CD8-positive, alpha-beta memory T cell (primary cell): ENCODE measurements at regions of chr6 and their contacts with region 1.

Region 1: DNA sequence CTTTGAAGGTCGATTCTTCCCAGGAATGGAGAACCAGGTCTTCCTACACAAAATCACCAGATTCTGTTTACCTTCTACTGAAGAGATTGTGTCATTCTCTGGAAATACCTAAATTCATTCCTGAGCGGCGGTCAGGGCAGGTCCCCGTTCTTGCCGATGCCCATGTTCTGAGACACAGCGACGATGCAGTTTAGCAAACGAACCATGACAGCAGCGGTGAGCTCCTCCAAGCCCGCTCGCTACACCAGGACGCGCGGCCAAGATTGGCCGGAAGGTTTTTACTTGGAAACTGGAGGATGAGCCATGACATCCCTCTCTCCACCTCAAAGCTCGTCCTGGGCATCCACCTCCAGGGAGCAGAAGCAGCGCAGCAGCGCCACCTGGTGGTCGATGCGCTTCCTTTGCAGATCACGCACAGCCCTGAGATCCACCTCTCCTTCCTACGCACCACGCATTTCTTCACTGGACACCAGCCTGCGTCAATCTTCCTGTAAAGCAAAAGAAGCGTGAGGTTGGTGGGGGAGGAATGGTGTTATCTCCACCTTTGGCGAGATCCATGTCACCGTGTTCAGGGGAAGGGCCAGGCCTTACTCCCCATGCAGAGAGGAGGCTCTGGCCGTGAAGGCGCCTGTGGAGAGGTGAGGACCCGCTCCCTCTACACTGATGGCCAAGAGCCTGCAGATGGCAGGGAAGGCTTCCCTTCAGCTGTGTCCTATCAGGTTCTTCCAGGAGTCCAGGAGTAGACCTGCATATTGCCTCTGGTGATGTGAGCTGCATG is 9.9 kb upstream of the HLA-B start:
- DNase-seq: peak; percentile 83 to 92 (median 85)
- H3K4me3 ChIP-seq: peak overlapping the region; percentile 63
- H3K4me3 Mint-ChIP-seq: peak overlapping the region; percentile 66 to 88 (median 83)
- H3K27ac ChIP-seq: no peak overlapping the region
- H3K27ac Mint-ChIP-seq: peak overlapping the region in 7 of 8 donors; percentile 21 to 93 (median 78)
- H3K4me1 ChIP-seq: no peaks in the 10 kb centered on the region
- H3K4me1 Mint-ChIP-seq: peaks cover 12 to 22% (median 15%) of the 10 kb centered on the region in 3 donors
- H3K27me3 ChIP-seq: peaks cover 10% of the 10 kb centered on the region
- H3K27me3 Mint-ChIP-seq: peaks cover 17 to 35% of the 10 kb centered on the region in 2 donors

Region 2: GRCh38 chr6:31190488-31190887 is 176.4 kb before region 1 on chr6:
- CTCF ChIA-PET with region 1: interaction called, 72 read pairs
- POLR2A ChIA-PET with region 1: interaction called, 24 read pairs
- DNase-seq: no peak
- H3K4me3 ChIP-seq: no peak overlapping the region
- H3K4me3 Mint-ChIP-seq: no peak overlapping the region
- H3K27ac ChIP-seq: no peak overlapping the region
- H3K27ac Mint-ChIP-seq: peak overlapping the region in 1 of 8 donors; percentile 72
- H3K4me1 ChIP-seq: no peaks in the 10 kb centered on the region
- H3K4me1 Mint-ChIP-seq: peaks cover 12 to 14% (median 14%) of the 10 kb centered on the region in 3 donors
- H3K27me3 ChIP-seq: no peaks in the 10 kb centered on the region
- H3K27me3 Mint-ChIP-seq: no peaks in the 10 kb centered on the region

Region 3: DNA sequence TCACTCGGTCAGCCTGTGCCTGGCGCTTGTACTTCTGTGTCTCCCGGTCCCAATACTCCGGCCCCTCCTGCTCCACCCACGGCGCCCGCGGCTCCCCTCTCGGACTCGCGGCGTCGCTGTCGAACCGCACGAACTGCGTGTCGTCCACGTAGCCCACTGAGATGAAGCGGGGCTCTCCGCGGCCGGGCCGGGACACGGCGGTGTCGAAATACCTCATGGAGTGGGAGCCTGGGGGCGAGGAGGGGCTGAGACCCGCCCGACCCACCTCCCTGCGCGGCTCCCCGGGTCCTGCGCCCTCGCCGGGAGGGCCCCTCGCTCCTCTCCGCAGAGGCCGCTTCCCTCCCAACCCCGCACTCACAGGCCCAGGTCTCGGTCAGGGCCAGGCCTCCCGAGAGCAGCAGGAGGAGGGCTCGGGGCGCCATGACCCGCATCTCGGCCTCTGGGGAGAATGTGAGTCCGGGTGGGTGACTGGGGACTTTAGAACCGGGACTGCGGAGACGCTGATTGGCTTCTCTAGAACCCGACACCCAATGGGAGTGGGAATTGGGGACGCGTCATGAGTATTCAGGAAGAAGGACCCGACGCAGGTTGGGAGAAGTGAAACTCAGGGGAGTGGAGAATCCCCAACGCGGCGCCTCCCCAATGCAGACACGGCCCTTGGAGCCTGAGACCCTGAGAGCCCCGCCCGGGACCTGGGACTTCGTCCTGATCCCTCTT is 95.1 kb before region 1 on chr6 and contains the start of gene HLA-C:
- CTCF ChIA-PET with region 1: interaction called, 13 read pairs
- POLR2A ChIA-PET with region 1: interaction called, 7 read pairs
- DNase-seq: peak; percentile 86 to 97 (median 91)
- H3K4me3 ChIP-seq: peak within 1 kb of the TSS; percentile 78
- H3K4me3 Mint-ChIP-seq: peak within 1 kb of the TSS; percentile 94 to 100 (median 98)
- H3K27ac ChIP-seq: peak within 1 kb of the TSS; percentile 89
- H3K27ac Mint-ChIP-seq: peak within 1 kb of the TSS; percentile 99 to 100 (median 100)
- H3K4me1 ChIP-seq: peaks cover 49% of the 10 kb centered on the region
- H3K4me1 Mint-ChIP-seq: peaks cover 58 to 70% (median 62%) of the 10 kb centered on the region in 3 donors
- H3K27me3 ChIP-seq: no peaks in the 10 kb centered on the region
- H3K27me3 Mint-ChIP-seq: peaks cover 0 to 20% of the 10 kb centered on the region in 2 donors
- total RNA-seq, gene HLA-C: 823 to 860 TPM

Region 4: DNA sequence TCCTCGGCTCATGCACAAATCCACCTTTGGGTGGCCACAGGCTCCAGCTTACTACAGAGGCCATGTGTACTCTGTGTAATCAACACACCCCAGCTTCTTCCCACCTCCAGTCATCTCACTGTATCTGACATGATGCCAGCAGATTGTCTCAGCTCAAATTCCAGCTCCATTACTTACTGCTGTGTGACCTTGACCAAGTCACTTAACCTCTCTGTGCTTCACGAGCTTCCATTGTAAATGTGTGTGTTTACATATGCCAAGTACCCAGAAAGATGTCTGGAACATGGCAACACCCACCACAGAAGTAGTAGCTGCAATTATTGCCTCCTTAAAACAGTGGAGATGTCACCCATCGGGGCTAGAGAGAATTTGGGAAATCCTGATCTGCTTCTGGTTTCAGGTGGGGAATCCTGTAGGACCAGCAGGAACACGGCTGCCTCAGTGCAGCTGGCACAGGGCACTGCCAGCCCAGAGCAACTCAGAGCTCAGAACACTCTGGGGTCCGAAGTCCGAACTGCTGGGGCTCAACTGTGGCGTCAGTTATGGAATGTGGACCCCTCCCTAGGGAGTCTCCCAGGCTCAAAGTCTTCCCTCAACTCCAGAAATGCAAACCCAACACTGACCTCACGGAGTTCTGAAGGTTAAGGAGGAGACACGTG is 11.3 kb after region 1 on chr6:
- CTCF ChIA-PET with region 1: interaction called, 26 read pairs
- POLR2A ChIA-PET with region 1: no interaction called
- DNase-seq: no peak
- H3K4me3 ChIP-seq: no peak overlapping the region
- H3K4me3 Mint-ChIP-seq: no peak overlapping the region
- H3K27ac ChIP-seq: no peak overlapping the region
- H3K27ac Mint-ChIP-seq: no peak overlapping the region
- H3K4me1 ChIP-seq: no peaks in the 10 kb centered on the region
- H3K4me1 Mint-ChIP-seq: no peaks in the 10 kb centered on the region
- H3K27me3 ChIP-seq: no peaks in the 10 kb centered on the region
- H3K27me3 Mint-ChIP-seq: peaks cover 16 to 33% of the 10 kb centered on the region in 2 donors